Activated CD4-positive, alpha-beta T cell treated with anti-CD3 and anti-CD28 coated beads for 36 hours (primary cell): ENCODE measurements at regions of chr1 and their contacts with region 1.

Region 1: DNA sequence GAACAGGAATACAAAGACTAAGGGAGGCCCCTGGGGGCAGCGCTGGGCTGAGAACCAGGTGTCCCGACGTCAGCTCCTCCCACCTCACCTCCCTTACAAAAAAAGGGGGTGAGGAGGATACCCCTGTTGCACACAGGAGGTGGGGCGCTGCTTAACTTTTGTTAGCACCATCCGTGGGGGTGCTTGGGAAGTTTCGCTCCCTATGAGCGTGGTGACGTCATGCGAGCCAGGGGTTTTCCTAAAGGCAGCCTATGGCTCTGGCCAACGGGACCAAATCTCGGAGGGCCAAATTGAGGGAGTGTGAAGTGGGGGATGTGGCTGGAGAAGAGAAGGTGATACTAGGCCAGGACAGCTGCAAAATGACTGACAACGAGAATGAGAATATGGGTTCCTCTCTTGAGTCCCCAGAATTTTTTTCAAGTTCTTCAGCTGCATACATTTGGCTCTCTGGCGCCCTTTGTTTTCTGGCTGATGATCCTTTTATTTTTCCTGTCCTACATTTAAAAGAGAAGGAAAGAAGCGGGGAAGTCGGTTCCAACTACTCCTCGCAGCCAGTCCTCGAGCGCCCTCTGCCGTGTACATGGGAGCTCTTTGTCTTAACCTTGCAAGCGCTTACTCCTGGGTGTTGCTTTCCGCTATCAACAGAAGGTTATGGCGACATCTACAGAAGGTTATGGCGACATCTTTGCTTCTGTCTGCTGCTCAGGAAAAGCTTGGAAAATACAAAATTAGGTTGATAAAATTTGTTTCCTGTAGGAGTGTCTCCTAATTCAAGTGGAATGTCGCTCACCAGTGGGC is 48.0 kb upstream of the ZC3H11B start:
- DNase-seq: peak; percentile 77
- ATAC-seq: peak; percentile 49
- H3K4me3 Mint-ChIP-seq: no peak overlapping the region
- H3K27ac Mint-ChIP-seq: no peak overlapping the region
- H3K4me1 Mint-ChIP-seq: no peaks in the 10 kb centered on the region
- H3K27me3 Mint-ChIP-seq: peaks cover 13% of the 10 kb centered on the region

Region 2: DNA sequence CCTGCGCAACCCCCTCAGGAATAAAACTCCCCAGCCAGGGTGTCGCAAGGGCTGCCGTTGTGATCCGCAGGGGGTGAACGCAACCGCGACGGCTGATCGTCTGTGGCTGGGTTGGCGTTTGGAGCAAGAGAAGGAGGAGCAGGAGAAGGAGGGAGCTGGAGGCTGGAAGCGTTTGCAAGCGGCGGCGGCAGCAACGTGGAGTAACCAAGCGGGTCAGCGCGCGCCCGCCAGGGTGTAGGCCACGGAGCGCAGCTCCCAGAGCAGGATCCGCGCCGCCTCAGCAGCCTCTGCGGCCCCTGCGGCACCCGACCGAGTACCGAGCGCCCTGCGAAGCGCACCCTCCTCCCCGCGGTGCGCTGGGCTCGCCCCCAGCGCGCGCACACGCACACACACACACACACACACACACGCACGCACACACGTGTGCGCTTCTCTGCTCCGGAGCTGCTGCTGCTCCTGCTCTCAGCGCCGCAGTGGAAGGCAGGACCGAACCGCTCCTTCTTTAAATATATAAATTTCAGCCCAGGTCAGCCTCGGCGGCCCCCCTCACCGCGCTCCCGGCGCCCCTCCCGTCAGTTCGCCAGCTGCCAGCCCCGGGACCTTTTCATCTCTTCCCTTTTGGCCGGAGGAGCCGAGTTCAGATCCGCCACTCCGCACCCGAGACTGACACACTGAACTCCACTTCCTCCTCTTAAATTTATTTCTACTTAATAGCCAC is 1315.0 kb before region 1 on chr1:
- CTCF ChIA-PET with region 1: no interaction called
- POLR2A ChIA-PET with region 1: no interaction called
- intact Hi-C with region 1: loop called in 1 of 2 experiments (anchors 10 kb)
- DNase-seq: peak; percentile 59
- ATAC-seq: peak; percentile 74
- H3K4me3 Mint-ChIP-seq: no peak overlapping the region
- H3K27ac Mint-ChIP-seq: no peak overlapping the region
- H3K4me1 Mint-ChIP-seq: peaks cover 21% of the 10 kb centered on the region
- H3K27me3 Mint-ChIP-seq: peaks cover 48% of the 10 kb centered on the region

Region 3: GRCh38 chr1:219201656-219202055 is 459.2 kb before region 1 on chr1:
- CTCF ChIA-PET with region 1: interaction called, 3 read pairs
- POLR2A ChIA-PET with region 1: no interaction called
- intact Hi-C with region 1: loop called (anchors 2 to 5 kb)
- DNase-seq: no peak
- ATAC-seq: no peak
- H3K4me3 Mint-ChIP-seq: no peak overlapping the region
- H3K27ac Mint-ChIP-seq: no peak overlapping the region
- H3K4me1 Mint-ChIP-seq: no peaks in the 10 kb centered on the region
- H3K27me3 Mint-ChIP-seq: no peaks in the 10 kb centered on the region

Region 4: DNA sequence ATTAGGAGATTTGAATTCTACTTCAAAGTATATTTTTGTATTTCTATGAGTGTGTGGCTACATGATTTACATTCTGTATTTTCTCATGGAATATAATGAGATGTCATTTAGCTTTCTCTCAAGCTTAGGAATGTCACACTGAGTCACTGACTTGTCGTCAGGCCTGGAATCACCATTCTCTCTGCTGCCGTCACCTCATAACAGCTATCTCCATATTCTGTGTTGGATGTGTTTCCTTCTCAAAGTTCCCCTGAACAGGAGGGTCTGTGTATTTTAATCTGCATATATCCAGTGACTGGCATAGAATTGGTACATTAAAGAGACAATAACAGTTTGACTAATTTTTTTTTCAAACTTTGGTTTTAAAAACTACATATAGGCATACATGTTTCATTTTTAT is 451.3 kb before region 1 on chr1:
- CTCF ChIA-PET with region 1: no interaction called
- POLR2A ChIA-PET with region 1: no interaction called
- intact Hi-C with region 1: loop called (anchors 2 to 5 kb)
- DNase-seq: no peak
- ATAC-seq: no peak
- H3K4me3 Mint-ChIP-seq: no peak overlapping the region
- H3K27ac Mint-ChIP-seq: no peak overlapping the region
- H3K4me1 Mint-ChIP-seq: no peaks in the 10 kb centered on the region
- H3K27me3 Mint-ChIP-seq: no peaks in the 10 kb centered on the region

Region 5: GRCh38 chr1:219220945-219221344 is 439.9 kb before region 1 on chr1:
- CTCF ChIA-PET with region 1: no interaction called
- POLR2A ChIA-PET with region 1: no interaction called
- intact Hi-C with region 1: no loop called
- DNase-seq: peak; percentile 5
- ATAC-seq: peak; percentile 51
- H3K4me3 Mint-ChIP-seq: no peak overlapping the region
- H3K27ac Mint-ChIP-seq: no peak overlapping the region
- H3K4me1 Mint-ChIP-seq: no peaks in the 10 kb centered on the region
- H3K27me3 Mint-ChIP-seq: no peaks in the 10 kb centered on the region

Region 6: GRCh38 chr1:219792337-219793021 is 131.6 kb after region 1 on chr1:
- CTCF ChIA-PET with region 1: no interaction called
- POLR2A ChIA-PET with region 1: no interaction called
- intact Hi-C with region 1: no loop called
- DNase-seq: no peak
- ATAC-seq: no peak
- H3K4me3 Mint-ChIP-seq: no peak overlapping the region
- H3K27ac Mint-ChIP-seq: no peak overlapping the region
- H3K4me1 Mint-ChIP-seq: no peaks in the 10 kb centered on the region
- H3K27me3 Mint-ChIP-seq: peaks cover 10% of the 10 kb centered on the region

Region 7: DNA sequence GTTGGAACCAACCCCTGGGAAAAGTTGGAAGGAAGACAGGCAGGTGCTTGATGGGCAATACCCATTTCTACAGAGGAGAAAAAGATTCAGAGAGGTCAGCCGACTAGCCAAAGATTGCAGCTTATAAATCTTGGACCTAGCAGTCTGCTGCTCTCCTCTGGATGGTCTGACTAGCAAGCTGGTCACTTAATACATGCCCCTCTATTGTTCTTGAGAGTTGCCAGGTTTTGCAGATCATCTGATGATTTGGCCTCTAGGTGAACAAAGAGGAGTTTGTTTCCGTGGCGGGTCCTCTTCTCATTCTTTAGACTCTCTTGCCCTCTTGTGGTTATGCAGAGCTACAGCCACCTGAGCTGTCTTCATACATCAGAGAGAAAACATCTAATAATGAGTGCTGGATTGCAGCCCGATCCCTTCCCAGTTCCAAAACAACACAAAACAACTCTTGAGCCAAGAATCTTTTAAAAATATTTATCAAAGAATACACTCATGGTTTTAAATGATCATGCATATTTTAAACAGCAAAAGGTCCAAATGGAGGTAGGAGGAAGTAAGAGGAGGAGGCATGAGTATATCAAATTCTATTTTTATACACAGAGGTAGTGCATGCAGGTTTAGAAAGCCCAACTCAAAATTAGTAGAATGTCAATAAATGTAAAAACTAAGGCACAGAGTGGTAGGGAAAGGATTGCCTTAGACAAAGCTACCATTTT is 151.8 kb after region 1 on chr1:
- CTCF ChIA-PET with region 1: interaction called, 5 read pairs
- POLR2A ChIA-PET with region 1: no interaction called
- intact Hi-C with region 1: loop called in 1 of 2 experiments (anchors 10 kb)
- DNase-seq: peak; percentile 14
- ATAC-seq: peak; percentile 55
- H3K4me3 Mint-ChIP-seq: no peak overlapping the region
- H3K27ac Mint-ChIP-seq: no peak overlapping the region
- H3K4me1 Mint-ChIP-seq: no peaks in the 10 kb centered on the region
- H3K27me3 Mint-ChIP-seq: peaks cover 9% of the 10 kb centered on the region